ENCODE measurements at regions of chr17 and their contacts with region 1.

Region 1: DNA sequence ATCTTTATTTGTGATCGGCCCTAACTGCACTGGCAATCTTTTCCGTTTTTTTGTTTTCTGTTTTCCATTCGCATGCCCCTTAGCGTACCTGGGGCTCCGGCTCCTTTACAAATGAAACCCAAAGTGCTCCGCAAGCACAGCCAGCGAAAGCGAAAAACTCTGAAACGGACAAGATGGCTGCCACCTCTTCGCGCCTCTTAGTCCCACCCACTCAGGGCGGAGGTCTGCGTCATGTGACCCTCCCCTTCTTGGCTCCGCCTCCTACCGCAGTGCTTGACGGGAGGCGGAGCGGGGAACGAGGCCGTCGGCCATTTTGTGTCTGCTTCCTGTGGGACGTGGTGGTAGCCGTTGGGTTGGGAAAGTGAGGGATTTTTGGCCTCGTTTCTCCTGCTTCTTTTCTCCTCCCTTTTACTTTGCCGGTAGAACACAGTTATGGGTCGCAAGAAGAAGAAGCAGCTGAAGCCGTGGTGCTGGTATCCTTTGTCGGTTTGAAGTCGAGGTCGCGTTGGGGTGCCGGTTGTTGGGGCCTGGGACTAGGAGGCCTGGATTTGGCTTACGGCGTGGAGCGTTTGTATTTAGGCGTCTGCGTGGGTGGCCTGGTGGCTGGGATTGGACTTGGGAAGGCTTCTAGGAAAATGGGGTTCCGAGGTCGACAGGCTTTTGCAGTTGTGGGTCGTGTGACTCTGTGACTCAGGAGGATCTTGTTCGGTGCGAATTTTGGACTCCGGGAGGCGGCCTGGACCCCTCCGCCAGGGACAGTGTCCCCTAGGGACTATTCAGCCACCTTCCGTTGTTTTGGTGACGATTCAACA is at the start of gene ZNF207:
- DNase-seq: peak; percentile 85 to 95 (median 95)
- ATAC-seq: peak; percentile 100
- H3K4me3 ChIP-seq: peak within 1 kb of the TSS; percentile 98
- H3K4me3 Mint-ChIP-seq: peak within 1 kb of the TSS; percentile 90 to 100 (median 98)
- H3K27ac ChIP-seq: peak within 1 kb of the TSS; percentile 98
- H3K27ac Mint-ChIP-seq: peak within 1 kb of the TSS; percentile 95 to 100 (median 99)
- H3K4me1 ChIP-seq: peaks cover 13 to 25% of the 10 kb centered on the region in 2 donors
- H3K4me1 Mint-ChIP-seq: peaks cover 19 to 54% (median 38%) of the 10 kb centered on the region in 7 donors
- H3K27me3 ChIP-seq: no peaks in the 10 kb centered on the region
- H3K27me3 Mint-ChIP-seq: no peaks in the 10 kb centered on the region
- total RNA-seq, gene ZNF207: 248 to 288 (median 281) TPM

Region 2: DNA sequence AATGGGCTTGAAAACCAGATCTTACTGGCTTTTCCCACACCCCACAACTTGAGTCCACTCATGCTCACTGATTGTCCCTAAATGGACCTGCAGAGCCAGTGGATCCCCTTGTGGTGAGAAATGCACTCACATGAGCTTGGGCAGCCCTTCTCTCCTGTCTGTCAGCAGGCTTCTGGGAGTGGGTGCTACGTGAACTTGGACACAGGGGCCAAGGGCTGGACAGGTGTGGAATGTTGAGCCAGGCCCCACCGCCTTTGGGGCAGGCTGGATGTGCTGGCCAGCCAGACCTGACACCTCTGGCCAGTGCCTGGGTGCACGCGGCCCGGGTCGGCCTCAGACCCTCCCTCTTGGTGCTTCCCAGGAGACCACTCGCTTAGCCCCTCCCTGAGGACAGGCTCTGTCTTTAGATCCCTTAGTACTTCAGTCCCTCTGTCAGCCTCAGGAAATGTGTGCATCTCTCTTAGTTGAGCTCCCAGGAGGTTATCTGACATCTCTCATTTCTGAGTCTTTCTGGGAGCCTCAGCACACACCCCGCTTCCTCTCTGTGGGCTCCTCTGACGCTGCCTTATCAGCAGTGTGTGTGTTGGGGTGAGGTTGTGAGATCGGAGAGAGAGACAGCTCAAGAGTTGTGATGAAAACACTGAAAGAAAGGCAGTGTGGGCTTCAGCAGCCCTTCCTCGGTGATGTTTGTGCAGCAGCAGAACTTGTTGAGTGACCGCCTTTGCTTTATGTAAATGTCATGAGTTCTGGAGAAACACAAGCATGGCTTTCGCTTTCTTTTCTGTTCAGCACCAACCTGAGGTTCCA is 841.6 kb before region 1 on chr17:
- CTCF ChIA-PET with region 1: no interaction called
- POLR2A ChIA-PET with region 1: no interaction called
- intact Hi-C with region 1: loop called in 1 of 2 experiments (anchors 5 kb)
- DNase-seq: peak in 8 of 9 donors; percentile 66 to 90 (median 85)
- ATAC-seq: peak; percentile 95
- H3K4me3 ChIP-seq: peak overlapping the region; percentile 62
- H3K4me3 Mint-ChIP-seq: peak overlapping the region; percentile 79 to 95 (median 90)
- H3K27ac ChIP-seq: peak overlapping the region; percentile 86
- H3K27ac Mint-ChIP-seq: peak overlapping the region; percentile 94 to 100 (median 97)
- H3K4me1 ChIP-seq: peaks cover 53 to 55% of the 10 kb centered on the region in 2 donors
- H3K4me1 Mint-ChIP-seq: peaks cover 50 to 80% (median 69%) of the 10 kb centered on the region in 7 donors
- H3K27me3 ChIP-seq: no peaks in the 10 kb centered on the region
- H3K27me3 Mint-ChIP-seq: no peaks in the 10 kb centered on the region

Region 3: GRCh38 chr17:31931756-31932155 is 418.3 kb before region 1 on chr17:
- CTCF ChIA-PET with region 1: no interaction called
- POLR2A ChIA-PET with region 1: no interaction called
- intact Hi-C with region 1: loop called in 1 of 2 experiments (anchors 1 kb)
- DNase-seq: no peak
- ATAC-seq: no peak
- H3K4me3 ChIP-seq: no peak overlapping the region
- H3K4me3 Mint-ChIP-seq: no peak overlapping the region
- H3K27ac ChIP-seq: no peak overlapping the region
- H3K27ac Mint-ChIP-seq: no peak overlapping the region
- H3K4me1 ChIP-seq: peaks cover 0 to 5% of the 10 kb centered on the region in 2 donors
- H3K4me1 Mint-ChIP-seq: peaks cover 0 to 8% (median 3%) of the 10 kb centered on the region in 7 donors
- H3K27me3 ChIP-seq: no peaks in the 10 kb centered on the region
- H3K27me3 Mint-ChIP-seq: no peaks in the 10 kb centered on the region

Region 4: DNA sequence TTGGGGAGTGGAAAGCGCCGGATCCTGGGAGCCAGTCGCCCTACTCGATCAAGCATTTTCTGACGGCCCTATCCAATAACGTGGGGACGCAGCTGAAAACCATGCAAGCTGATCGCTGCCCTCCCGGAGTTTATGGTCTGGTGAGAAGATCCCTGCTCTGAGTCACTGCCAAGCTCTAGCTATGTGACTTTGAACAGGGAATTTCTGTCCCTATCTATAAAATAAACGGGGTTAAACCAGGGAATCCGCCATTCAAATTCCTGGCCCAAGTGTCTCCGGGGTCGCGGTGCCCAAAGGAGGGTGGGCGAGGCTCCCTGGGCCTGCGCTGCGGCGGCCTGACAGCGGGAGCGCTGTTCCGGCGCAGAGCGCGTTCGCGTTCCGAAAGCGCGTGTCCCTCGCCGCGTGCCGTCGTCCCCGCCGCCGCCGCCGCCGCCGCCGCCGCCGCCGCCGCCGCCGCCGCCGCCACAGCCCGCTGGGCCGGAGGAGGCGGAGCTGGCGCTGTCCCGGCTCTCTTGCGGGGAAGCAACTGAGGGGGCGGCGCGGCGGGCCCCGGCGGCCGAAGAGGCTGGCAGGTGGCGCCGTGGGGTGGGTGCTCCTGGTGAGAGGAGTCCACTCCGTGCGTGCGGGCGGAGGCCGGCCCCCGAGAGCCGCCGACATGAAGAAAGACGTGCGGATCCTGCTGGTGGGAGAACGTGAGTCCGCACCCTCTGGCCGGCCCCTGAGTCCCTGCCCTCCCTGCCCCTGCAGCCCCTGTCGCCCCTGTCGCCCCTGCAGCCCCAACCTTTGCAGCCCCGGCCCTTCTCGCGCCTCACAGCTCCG is 207.8 kb before region 1 on chr17 and contains the start of gene RHOT1:
- CTCF ChIA-PET with region 1: no interaction called
- POLR2A ChIA-PET with region 1: no interaction called
- intact Hi-C with region 1: loop called (anchors 1 to 5 kb)
- DNase-seq: peak; percentile 55 to 84 (median 75)
- ATAC-seq: peak; percentile 90
- H3K4me3 ChIP-seq: peak within 1 kb of the TSS; percentile 91
- H3K4me3 Mint-ChIP-seq: peak within 1 kb of the TSS; percentile 92 to 100 (median 96)
- H3K27ac ChIP-seq: peak within 1 kb of the TSS; percentile 85
- H3K27ac Mint-ChIP-seq: peak within 1 kb of the TSS; percentile 77 to 93 (median 91)
- H3K4me1 ChIP-seq: peaks cover 5 to 15% of the 10 kb centered on the region in 2 donors
- H3K4me1 Mint-ChIP-seq: peaks cover 5 to 43% (median 39%) of the 10 kb centered on the region in 7 donors
- H3K27me3 ChIP-seq: no peaks in the 10 kb centered on the region
- H3K27me3 Mint-ChIP-seq: peaks cover 0 to 4% (median 0%) of the 10 kb centered on the region in 5 donors
- total RNA-seq, gene RHOT1: 24.3 to 31.7 (median 29.3) TPM

Region 5: GRCh38 chr17:32319548-32319905 is 30.5 kb before region 1 on chr17:
- CTCF ChIA-PET with region 1: no interaction called
- POLR2A ChIA-PET with region 1: no interaction called
- intact Hi-C with region 1: loop called in 1 of 2 experiments (anchors 1 kb)
- DNase-seq: peak; percentile 47 to 85 (median 60)
- ATAC-seq: peak; percentile 89
- H3K4me3 ChIP-seq: no peak overlapping the region
- H3K4me3 Mint-ChIP-seq: peak overlapping the region; percentile 67 to 87 (median 74)
- H3K27ac ChIP-seq: no peak overlapping the region
- H3K27ac Mint-ChIP-seq: peak overlapping the region in 1 of 9 donors; percentile 66
- H3K4me1 ChIP-seq: peaks cover 0 to 13% of the 10 kb centered on the region in 2 donors
- H3K4me1 Mint-ChIP-seq: peaks cover 8 to 37% (median 11%) of the 10 kb centered on the region in 7 donors
- H3K27me3 ChIP-seq: no peaks in the 10 kb centered on the region
- H3K27me3 Mint-ChIP-seq: peaks cover 3 to 26% (median 5%) of the 10 kb centered on the region in 5 donors

Region 6: DNA sequence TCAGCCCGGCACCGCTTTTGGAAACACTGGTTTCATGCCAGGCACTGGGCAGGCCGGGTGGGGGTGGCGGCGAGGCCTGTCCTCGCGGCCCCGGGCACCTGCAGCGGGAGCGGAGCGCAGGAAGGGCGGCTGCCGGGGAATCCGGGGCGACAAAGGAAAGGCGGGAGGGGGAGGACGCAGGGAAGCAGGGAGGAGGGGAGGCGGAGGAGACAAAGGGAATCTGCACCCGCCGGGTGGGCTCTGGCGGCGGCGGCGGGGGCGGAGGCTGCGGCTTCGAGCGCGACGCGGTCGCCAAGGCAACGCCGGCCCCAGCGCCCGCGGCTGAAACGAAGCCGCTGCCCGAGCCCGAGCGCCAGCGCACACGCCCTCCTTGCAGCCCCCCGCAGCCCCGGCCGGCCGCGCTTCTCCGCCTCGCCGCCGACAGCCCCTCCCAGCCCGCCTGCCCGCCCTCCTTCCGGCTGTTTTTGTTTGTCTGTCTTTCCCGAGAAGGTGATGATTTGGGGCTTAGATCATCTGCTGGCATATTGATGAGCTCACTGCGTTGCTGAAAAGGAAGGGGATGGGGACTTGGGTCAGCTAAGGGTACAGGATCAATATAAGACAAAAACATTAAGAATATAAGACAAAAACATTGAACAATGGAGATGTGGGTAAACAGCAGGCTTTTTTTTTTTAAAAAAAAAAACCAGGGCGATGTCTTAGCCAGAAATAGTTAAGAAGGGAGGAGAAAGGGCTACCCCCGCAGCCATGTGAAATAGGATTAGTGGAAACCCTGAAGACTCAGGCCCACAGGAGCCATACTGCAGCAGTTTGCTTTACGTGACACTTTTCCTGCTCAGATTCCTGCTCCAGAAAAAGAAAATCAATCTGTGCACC is 169.4 kb after region 1 on chr17:
- CTCF ChIA-PET with region 1: no interaction called
- POLR2A ChIA-PET with region 1: no interaction called
- intact Hi-C with region 1: loop called in 1 of 2 experiments (anchors 1 kb)
- DNase-seq: peak; percentile 23 to 73 (median 46)
- ATAC-seq: peak; percentile 64
- H3K4me3 ChIP-seq: peak overlapping the region; percentile 50
- H3K4me3 Mint-ChIP-seq: peak overlapping the region; percentile 76 to 96 (median 88)
- H3K27ac ChIP-seq: peak overlapping the region; percentile 60
- H3K27ac Mint-ChIP-seq: peak overlapping the region; percentile 88 to 99 (median 93)
- H3K4me1 ChIP-seq: peaks cover 53 to 66% of the 10 kb centered on the region in 2 donors
- H3K4me1 Mint-ChIP-seq: peaks cover 40 to 83% (median 78%) of the 10 kb centered on the region in 7 donors
- H3K27me3 ChIP-seq: no peaks in the 10 kb centered on the region
- H3K27me3 Mint-ChIP-seq: no peaks in the 10 kb centered on the region

Region 7: DNA sequence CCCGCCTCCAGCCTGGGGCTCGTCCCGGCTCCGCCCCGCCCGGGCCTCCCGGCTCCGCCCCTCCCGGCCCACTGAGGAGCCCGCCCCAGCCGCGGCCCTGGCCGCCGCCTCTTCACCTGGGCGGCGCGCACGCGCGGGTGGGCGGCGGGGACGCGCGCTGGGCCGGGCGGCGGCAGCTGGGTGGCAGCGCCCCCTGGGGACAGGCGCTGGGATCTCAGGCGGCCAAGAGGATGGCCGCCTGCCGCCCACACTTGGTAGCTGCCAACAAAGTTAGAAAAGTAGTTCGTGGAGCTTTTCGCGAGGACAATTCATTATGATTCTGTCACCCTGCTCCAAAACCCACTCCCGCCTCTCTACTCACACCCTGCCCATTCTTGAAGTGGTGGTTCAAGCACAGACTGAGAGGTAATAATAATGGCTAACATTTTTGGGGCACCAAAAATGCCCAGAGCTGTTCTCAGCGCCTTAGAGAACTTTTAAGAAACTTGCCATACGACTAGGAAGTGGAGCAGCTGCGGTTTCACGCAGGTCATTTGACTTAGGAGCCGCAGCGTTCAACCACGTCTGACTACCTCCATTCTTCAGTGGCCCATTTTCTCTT is 527.2 kb after region 1 on chr17:
- CTCF ChIA-PET with region 1: no interaction called
- POLR2A ChIA-PET with region 1: no interaction called
- intact Hi-C with region 1: loop called in 1 of 2 experiments (anchors 1 kb)
- DNase-seq: peak; percentile 87 to 99 (median 95)
- ATAC-seq: peak; percentile 98
- H3K4me3 ChIP-seq: peak overlapping the region; percentile 59
- H3K4me3 Mint-ChIP-seq: peak overlapping the region; percentile 72 to 88 (median 83)
- H3K27ac ChIP-seq: peak overlapping the region; percentile 66
- H3K27ac Mint-ChIP-seq: peak overlapping the region; percentile 56 to 94 (median 83)
- H3K4me1 ChIP-seq: peaks cover 0 to 8% of the 10 kb centered on the region in 2 donors
- H3K4me1 Mint-ChIP-seq: peaks cover 7 to 15% (median 11%) of the 10 kb centered on the region in 7 donors
- H3K27me3 ChIP-seq: peaks cover 0 to 4% of the 10 kb centered on the region in 2 donors
- H3K27me3 Mint-ChIP-seq: peaks cover 0 to 42% (median 7%) of the 10 kb centered on the region in 5 donors